ENCODE measurements at regions of chr1 and their contacts with region 1.

Region 1: GRCh38 chr1:100485855-100486258 is 52.1 kb upstream of the GPR88 start:
- DNase-seq: no peak
- ATAC-seq: no peak
- H3K4me3 ChIP-seq: no peak overlapping the region
- H3K27ac ChIP-seq: no peak overlapping the region
- H3K4me1 ChIP-seq: no peaks in the 10 kb centered on the region
- H3K27me3 ChIP-seq: no peaks in the 10 kb centered on the region
- CTCF ChIP-seq: no peak
- POLR2A ChIP-seq: no peak
- RAD21 ChIP-seq: no peak

Region 2: DNA sequence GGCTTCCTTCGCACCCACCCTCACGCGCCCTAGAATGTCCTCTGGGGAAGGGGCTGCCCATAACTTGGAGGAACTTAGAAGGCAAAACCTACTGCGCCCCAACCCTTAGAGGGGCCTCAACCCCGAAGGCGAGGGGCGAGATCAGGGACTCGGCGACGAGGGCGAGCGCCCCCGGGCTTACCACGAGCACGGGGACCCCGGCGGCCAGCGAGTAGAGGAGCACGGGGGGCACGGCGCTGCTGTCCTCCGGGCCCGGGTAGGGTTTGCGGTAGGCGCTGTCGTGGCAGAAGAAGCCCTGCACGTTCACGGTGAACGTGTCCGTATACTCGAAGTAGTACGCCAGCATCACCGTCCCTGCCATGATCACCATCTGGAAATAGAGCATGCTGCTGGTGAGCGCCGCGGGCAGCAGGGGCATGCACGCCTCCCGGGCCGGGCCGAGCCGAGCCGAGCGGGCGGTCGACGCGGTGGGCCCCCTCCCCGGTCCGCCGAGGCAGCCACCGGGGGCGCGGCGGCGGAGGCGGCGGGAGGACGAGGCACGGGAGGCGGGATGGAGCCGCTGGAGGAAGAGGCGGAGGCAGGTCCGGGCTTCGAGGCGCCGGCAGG is 1481.5 kb before region 1 on chr1:
- CTCF ChIA-PET with region 1: interaction called, 10 read pairs
- POLR2A ChIA-PET with region 1: no interaction called
- dilution Hi-C with region 1: no loop called
- in situ Hi-C with region 1: no loop called
- intact Hi-C with region 1: no loop called
- DNase-seq: peak; percentile 19
- ATAC-seq: peak; percentile 77
- H3K4me3 ChIP-seq: peak overlapping the region; percentile 24
- H3K27ac ChIP-seq: no peak overlapping the region
- H3K4me1 ChIP-seq: no peaks in the 10 kb centered on the region; the same call in 1 of the 2 replicates
- H3K27me3 ChIP-seq: peaks cover 33% of the 10 kb centered on the region
- CTCF ChIP-seq: no peak
- POLR2A ChIP-seq: no peak
- RAD21 ChIP-seq: no peak

Region 3: GRCh38 chr1:100584761-100585745 is 99.2 kb after region 1 on chr1:
- CTCF ChIA-PET with region 1: no interaction called
- POLR2A ChIA-PET with region 1: no interaction called
- dilution Hi-C with region 1: no loop called
- in situ Hi-C with region 1: no loop called
- intact Hi-C with region 1: loop called (anchors 10 kb)
- DNase-seq: peak; percentile 12
- ATAC-seq: no peak
- H3K4me3 ChIP-seq: no peak overlapping the region
- H3K27ac ChIP-seq: no peak overlapping the region
- H3K4me1 ChIP-seq: no peaks in the 10 kb centered on the region; the same call in 1 of the 2 replicates
- H3K27me3 ChIP-seq: no peaks in the 10 kb centered on the region
- CTCF ChIP-seq: no peak
- POLR2A ChIP-seq: no peak
- RAD21 ChIP-seq: no peak